ENCODE measurements at regions of chr12 and their contacts with region 1.

Region 1: GRCh38 chr12:54324617-54325441 is at the start of gene COPZ1:
- DNase-seq: peak; percentile 77
- ATAC-seq: peak; percentile 95
- H3K4me3 Mint-ChIP-seq: peak within 1 kb of the TSS; percentile 97
- H3K27ac Mint-ChIP-seq: peak within 1 kb of the TSS; percentile 97
- H3K4me1 Mint-ChIP-seq: peaks cover 31% of the 10 kb centered on the region
- H3K27me3 Mint-ChIP-seq: no peaks in the 10 kb centered on the region
- CTCF ChIP-seq: no peak
- total RNA-seq, gene COPZ1: 120 and 124 TPM in 2 replicates

Region 2: DNA sequence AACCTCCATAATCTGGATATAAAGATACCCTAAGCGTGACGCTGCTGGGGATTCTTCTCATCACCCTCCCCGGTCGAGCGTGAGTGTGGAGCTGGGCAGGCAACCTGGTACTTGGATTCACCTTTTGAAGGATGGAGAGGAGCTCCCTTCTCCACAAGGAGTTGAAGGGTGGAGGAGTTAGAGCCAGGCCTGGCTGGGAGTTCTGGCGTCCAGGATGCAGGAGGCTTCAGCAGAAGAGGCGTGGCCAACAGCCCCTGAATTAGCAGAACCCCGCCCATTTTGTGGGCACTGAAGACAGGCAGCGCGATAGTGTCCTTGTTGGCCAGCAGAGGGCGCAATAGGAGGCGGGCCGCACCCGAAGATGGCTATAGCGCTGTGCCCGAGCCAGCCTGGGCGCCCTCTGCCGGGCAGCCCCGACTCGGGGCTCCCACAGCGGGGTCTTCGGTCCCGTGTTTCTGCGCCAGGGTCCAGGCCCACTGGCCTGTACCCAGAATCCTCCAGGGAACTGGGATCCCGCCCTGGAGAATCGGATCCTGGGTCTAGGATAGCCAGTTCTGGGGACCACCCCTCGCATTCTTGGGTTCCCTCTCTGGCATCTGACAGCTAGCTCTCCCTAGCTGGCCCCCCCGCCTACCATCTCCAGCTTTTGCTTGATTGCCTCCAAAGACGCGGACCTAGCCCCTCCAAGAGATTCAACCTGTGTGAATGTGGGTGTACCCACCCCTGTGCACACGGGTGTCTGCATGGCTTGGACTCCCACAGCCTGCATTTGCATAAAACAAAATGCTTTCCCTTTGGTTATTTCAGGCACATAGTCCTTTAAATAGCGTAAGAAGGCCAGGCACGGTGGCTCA is 110.0 kb before region 1 on chr12:
- CTCF ChIA-PET with region 1: interaction called, 10 read pairs
- POLR2A ChIA-PET with region 1: no interaction called
- intact Hi-C with region 1: loop called (anchors 1 kb)
- DNase-seq: peak; percentile 87
- ATAC-seq: peak; percentile 85
- H3K4me3 Mint-ChIP-seq: peak overlapping the region; percentile 83
- H3K27ac Mint-ChIP-seq: no peak overlapping the region
- H3K4me1 Mint-ChIP-seq: peaks cover 45% of the 10 kb centered on the region
- H3K27me3 Mint-ChIP-seq: peaks cover 5% of the 10 kb centered on the region
- CTCF ChIP-seq: peak; percentile 97

Region 3: DNA sequence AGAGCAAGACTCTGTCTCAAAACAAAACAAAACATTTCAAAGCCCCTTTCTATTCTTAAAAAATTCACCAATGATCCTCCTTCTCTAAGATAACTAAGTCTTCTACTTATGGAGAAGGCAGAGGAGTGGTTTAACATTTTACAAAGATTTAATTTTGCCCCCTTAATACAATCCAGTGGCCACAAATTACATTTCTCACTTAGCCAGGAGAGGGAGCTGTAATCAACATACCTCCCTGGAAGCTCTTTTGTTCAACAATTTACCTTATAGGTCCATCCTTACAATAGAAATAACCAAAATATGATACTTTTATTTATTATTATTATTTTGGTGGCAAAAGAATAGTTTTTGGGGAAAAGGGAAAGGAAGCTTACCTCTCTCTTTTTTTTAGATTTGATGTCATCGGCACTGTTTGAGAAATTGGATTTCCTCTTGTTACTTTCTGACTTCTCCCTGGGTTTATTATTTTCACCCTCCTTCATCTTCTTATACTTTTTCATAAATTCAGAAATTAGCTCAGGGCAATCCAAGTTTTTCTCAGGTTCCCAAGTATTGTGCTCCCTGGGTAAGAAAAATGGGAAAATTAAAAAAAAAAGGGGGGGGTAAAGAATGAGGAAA is 73.1 kb before region 1 on chr12:
- CTCF ChIA-PET with region 1: interaction called, 24 read pairs
- POLR2A ChIA-PET with region 1: interaction called, 23 read pairs
- intact Hi-C with region 1: loop called (anchors 1 kb)
- DNase-seq: no peak
- ATAC-seq: peak; percentile 74
- H3K4me3 Mint-ChIP-seq: no peak overlapping the region
- H3K27ac Mint-ChIP-seq: no peak overlapping the region
- H3K4me1 Mint-ChIP-seq: peaks cover 7% of the 10 kb centered on the region
- H3K27me3 Mint-ChIP-seq: no peaks in the 10 kb centered on the region
- CTCF ChIP-seq: peak; percentile 30

Region 4: GRCh38 chr12:54294152-54294952 is 30.5 kb before region 1 on chr12:
- CTCF ChIA-PET with region 1: interaction called, 6 read pairs
- POLR2A ChIA-PET with region 1: interaction called, 13 read pairs
- intact Hi-C with region 1: loop called (anchors 1 kb)
- DNase-seq: no peak
- ATAC-seq: peak; percentile 79
- H3K4me3 Mint-ChIP-seq: no peak overlapping the region
- H3K27ac Mint-ChIP-seq: no peak overlapping the region
- H3K4me1 Mint-ChIP-seq: peaks cover 12% of the 10 kb centered on the region
- H3K27me3 Mint-ChIP-seq: peaks cover 12% of the 10 kb centered on the region
- CTCF ChIP-seq: no peak

Region 5: GRCh38 chr12:54337280-54337842 is 12.5 kb after region 1 on chr12:
- CTCF ChIA-PET with region 1: interaction called, 8 read pairs
- POLR2A ChIA-PET with region 1: interaction called, 11 read pairs
- intact Hi-C with region 1: loop called (anchors 1 kb)
- DNase-seq: no peak
- ATAC-seq: no peak
- H3K4me3 Mint-ChIP-seq: no peak overlapping the region
- H3K27ac Mint-ChIP-seq: no peak overlapping the region
- H3K4me1 Mint-ChIP-seq: peaks cover 9% of the 10 kb centered on the region
- H3K27me3 Mint-ChIP-seq: no peaks in the 10 kb centered on the region
- CTCF ChIP-seq: no peak

Region 6: GRCh38 chr12:54368709-54369583 is 44.1 kb after region 1 on chr12:
- CTCF ChIA-PET with region 1: no interaction called
- POLR2A ChIA-PET with region 1: interaction called, 5 read pairs
- intact Hi-C with region 1: loop called (anchors 1 kb)
- DNase-seq: peak; percentile 78
- ATAC-seq: peak; percentile 95
- H3K4me3 Mint-ChIP-seq: peak overlapping the region; percentile 55
- H3K27ac Mint-ChIP-seq: no peak overlapping the region
- H3K4me1 Mint-ChIP-seq: peaks cover 22% of the 10 kb centered on the region
- H3K27me3 Mint-ChIP-seq: no peaks in the 10 kb centered on the region
- CTCF ChIP-seq: peak; percentile 60

Region 7: GRCh38 chr12:54749191-54749818 is 424.5 kb after region 1 on chr12:
- CTCF ChIA-PET with region 1: no interaction called
- POLR2A ChIA-PET with region 1: no interaction called
- intact Hi-C with region 1: no loop called
- DNase-seq: no peak
- ATAC-seq: peak; percentile 54
- H3K4me3 Mint-ChIP-seq: no peak overlapping the region
- H3K27ac Mint-ChIP-seq: no peak overlapping the region
- H3K4me1 Mint-ChIP-seq: peaks cover 3% of the 10 kb centered on the region
- H3K27me3 Mint-ChIP-seq: peaks cover 2% of the 10 kb centered on the region
- CTCF ChIP-seq: peak; percentile 75

Measured in activated B cell treated with CpG ODN at 0.5 μM for 24 hours (primary cell).